ENCODE measurements at regions of chr4 and their contacts with region 1.

Region 1: DNA sequence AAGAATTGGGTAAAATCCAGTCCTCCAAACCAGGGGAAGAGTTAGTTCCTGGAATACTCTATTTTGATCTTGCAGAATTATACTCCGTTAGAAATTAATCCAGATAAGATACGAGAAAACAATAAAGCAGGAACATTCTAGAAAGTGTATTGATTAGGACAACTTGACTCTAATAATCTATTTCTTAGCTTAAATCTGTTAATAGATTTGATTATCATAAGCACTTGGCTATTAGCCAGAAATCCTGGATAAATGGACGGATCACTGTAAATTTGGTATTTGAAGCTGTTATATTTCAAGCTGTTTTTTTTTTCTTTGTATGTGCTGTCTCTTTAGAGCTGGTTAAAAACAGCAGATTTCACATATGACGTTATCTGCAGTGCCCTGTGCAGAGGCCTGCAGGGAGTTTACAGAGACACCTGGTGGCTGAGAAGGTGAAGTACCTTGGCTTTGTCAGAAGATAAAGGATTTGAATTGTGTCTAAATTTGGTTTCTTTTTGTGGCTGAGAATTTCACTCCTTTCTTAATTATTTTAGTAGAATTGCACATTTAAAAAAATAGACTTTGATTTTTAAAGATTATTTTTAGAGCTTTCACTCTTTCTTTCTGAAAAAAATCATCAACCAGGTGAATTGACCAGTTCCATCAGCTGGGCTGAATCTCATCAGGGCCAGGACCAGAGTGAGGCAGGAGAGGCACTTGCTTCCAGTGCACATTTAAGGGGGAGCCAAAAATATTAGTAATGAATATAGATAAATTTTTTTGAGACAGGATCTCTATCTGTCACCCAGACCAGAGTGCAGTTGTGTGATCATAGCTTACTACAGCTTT is 9.7 kb upstream of the CHRNA9 start:
- DNase-seq: peak; percentile 46 to 89 (median 56)
- ATAC-seq: peak; percentile 100
- H3K4me3 ChIP-seq: no peak overlapping the region
- H3K4me3 Mint-ChIP-seq: no peak overlapping the region
- H3K27ac ChIP-seq: no peak overlapping the region
- H3K27ac Mint-ChIP-seq: peak overlapping the region; percentile 6
- H3K4me1 ChIP-seq: no peaks in the 10 kb centered on the region
- H3K4me1 Mint-ChIP-seq: peaks cover 21% of the 10 kb centered on the region
- H3K27me3 ChIP-seq: no peaks in the 10 kb centered on the region
- H3K27me3 Mint-ChIP-seq: no peaks in the 10 kb centered on the region
- CTCF ChIP-seq: peak; percentile 89

Region 2: GRCh38 chr4:39977489-39978377 is 347.7 kb before region 1 on chr4 and contains the start of gene PDS5A:
- CTCF ChIA-PET with region 1: no interaction called
- POLR2A ChIA-PET with region 1: no interaction called
- intact Hi-C with region 1: loop called in 1 of 2 experiments (anchors 2 kb)
- DNase-seq: peak; percentile 76 to 96 (median 86)
- ATAC-seq: peak; percentile 85
- H3K4me3 ChIP-seq: peak within 1 kb of the TSS; percentile 90
- H3K4me3 Mint-ChIP-seq: peak within 1 kb of the TSS; percentile 86
- H3K27ac ChIP-seq: peak within 1 kb of the TSS; percentile 78 to 92
- H3K27ac Mint-ChIP-seq: peak within 1 kb of the TSS; percentile 93
- H3K4me1 ChIP-seq: peaks cover 36% of the 10 kb centered on the region
- H3K4me1 Mint-ChIP-seq: peaks cover 34% of the 10 kb centered on the region
- H3K27me3 ChIP-seq: no peaks in the 10 kb centered on the region
- H3K27me3 Mint-ChIP-seq: no peaks in the 10 kb centered on the region
- CTCF ChIP-seq: peak; percentile 73
- total RNA-seq, gene PDS5A: 80.0 to 80.6 TPM

Region 3: GRCh38 chr4:40193016-40193571 is 132.3 kb before region 1 on chr4:
- CTCF ChIA-PET with region 1: interaction called, 26 read pairs
- POLR2A ChIA-PET with region 1: interaction called, 6 read pairs
- intact Hi-C with region 1: no loop called
- DNase-seq: peak in 8 of 14 experiments; percentile 43 to 79 (median 51)
- ATAC-seq: peak; percentile 25
- H3K4me3 ChIP-seq: peak overlapping the region; percentile 74
- H3K4me3 Mint-ChIP-seq: peak overlapping the region; percentile 94
- H3K27ac ChIP-seq: peak overlapping the region; percentile 67 to 99
- H3K27ac Mint-ChIP-seq: peak overlapping the region; percentile 99
- H3K4me1 ChIP-seq: peaks cover 43% of the 10 kb centered on the region
- H3K4me1 Mint-ChIP-seq: peaks cover 72% of the 10 kb centered on the region
- H3K27me3 ChIP-seq: no peaks in the 10 kb centered on the region
- H3K27me3 Mint-ChIP-seq: peaks cover 5% of the 10 kb centered on the region
- CTCF ChIP-seq: no peak

Region 4: GRCh38 chr4:40205259-40206198 is 119.9 kb before region 1 on chr4:
- CTCF ChIA-PET with region 1: interaction called, 16 read pairs
- POLR2A ChIA-PET with region 1: interaction called, 5 read pairs
- intact Hi-C with region 1: no loop called
- DNase-seq: peak in 4 of 14 experiments; percentile 41 to 76 (median 70)
- ATAC-seq: peak; percentile 41
- H3K4me3 ChIP-seq: peak overlapping the region; percentile 74
- H3K4me3 Mint-ChIP-seq: peak overlapping the region; percentile 100
- H3K27ac ChIP-seq: peak overlapping the region; percentile 93 to 99
- H3K27ac Mint-ChIP-seq: peak overlapping the region; percentile 99
- H3K4me1 ChIP-seq: peaks cover 42% of the 10 kb centered on the region
- H3K4me1 Mint-ChIP-seq: peaks cover 79% of the 10 kb centered on the region
- H3K27me3 ChIP-seq: no peaks in the 10 kb centered on the region
- H3K27me3 Mint-ChIP-seq: no peaks in the 10 kb centered on the region
- CTCF ChIP-seq: no peak

Region 5: GRCh38 chr4:40228497-40229365 is 96.7 kb before region 1 on chr4:
- CTCF ChIA-PET with region 1: interaction called, 10 read pairs
- POLR2A ChIA-PET with region 1: interaction called, 5 read pairs
- intact Hi-C with region 1: no loop called
- DNase-seq: peak in 1 of 14 experiments; percentile 52
- ATAC-seq: no peak
- H3K4me3 ChIP-seq: peak overlapping the region; percentile 8
- H3K4me3 Mint-ChIP-seq: peak overlapping the region; percentile 49
- H3K27ac ChIP-seq: peak overlapping the region; percentile 70 to 82
- H3K27ac Mint-ChIP-seq: peak overlapping the region; percentile 93
- H3K4me1 ChIP-seq: peaks cover 86% of the 10 kb centered on the region
- H3K4me1 Mint-ChIP-seq: peaks cover 91% of the 10 kb centered on the region
- H3K27me3 ChIP-seq: no peaks in the 10 kb centered on the region
- H3K27me3 Mint-ChIP-seq: no peaks in the 10 kb centered on the region
- CTCF ChIP-seq: peak; percentile 37

Region 6: DNA sequence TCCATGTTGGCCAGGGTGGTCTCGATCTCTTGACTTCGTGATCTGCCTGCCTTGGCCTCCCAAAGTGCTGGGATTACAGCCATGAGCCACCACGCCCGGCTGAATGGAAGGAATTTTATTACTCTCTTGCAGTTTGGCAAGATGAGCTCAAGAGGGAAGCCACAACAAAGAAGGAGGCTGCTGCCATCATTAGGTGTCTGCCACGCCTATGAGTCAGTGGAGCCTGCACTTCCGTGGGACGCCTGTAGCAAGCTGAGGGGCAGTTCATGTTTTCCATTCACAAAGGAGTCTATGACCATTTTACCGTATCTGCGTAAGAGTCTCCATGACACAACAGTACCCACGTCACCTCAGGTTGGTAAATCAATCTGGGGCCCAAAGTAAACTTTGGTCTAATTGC is 41.4 kb before region 1 on chr4:
- CTCF ChIA-PET with region 1: interaction called, 25 read pairs
- POLR2A ChIA-PET with region 1: interaction called, 5 read pairs
- intact Hi-C with region 1: no loop called
- DNase-seq: peak; percentile 58 to 93 (median 78)
- ATAC-seq: peak; percentile 97
- H3K4me3 ChIP-seq: no peak overlapping the region
- H3K4me3 Mint-ChIP-seq: peak overlapping the region; percentile 82
- H3K27ac ChIP-seq: peak overlapping the region; percentile 33 to 60
- H3K27ac Mint-ChIP-seq: peak overlapping the region; percentile 85
- H3K4me1 ChIP-seq: peaks cover 47% of the 10 kb centered on the region
- H3K4me1 Mint-ChIP-seq: peaks cover 76% of the 10 kb centered on the region
- H3K27me3 ChIP-seq: no peaks in the 10 kb centered on the region
- H3K27me3 Mint-ChIP-seq: no peaks in the 10 kb centered on the region
- CTCF ChIP-seq: peak; percentile 49